Panc1 (cell line): ENCODE measurements at regions of chr4 and their contacts with region 1.

Region 1: DNA sequence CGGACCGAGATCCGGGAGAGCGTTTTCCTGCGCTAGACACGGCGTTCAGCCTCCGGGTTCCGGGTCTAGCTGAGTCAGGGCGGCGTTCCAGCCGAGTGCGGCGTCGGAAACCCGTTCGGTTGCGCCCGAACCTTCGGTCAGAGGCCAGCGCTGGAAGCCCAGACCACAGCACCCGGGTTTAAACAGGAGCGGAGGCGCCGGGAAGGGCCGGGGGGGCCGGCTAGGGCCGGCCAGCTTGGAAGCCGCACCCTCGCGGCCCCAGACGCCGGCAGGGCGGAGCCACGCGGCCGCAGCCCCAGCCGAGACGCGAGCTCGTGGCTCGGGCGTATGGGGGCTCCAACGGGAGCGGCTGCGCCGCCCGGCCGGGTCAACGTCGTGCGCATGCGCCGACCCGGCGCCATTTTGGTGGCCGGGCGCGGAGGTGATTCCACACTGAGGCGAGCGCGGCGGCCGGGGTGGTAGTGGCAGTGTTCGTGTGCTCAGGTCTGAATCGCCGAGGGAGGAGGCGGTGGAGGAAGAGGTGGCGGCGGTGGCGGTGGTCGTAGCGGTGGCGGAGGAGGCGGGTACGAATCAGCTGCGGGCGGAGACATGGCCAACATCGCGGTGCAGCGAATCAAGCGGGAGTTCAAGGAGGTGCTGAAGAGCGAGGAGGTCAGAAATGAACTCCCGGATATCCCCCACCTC is at the start of gene UBE2K:
- DNase-seq: no peak
- ATAC-seq: peak; percentile 98
- H3K4me3 ChIP-seq: peak within 1 kb of the TSS; percentile 85 to 86
- H3K27ac ChIP-seq: peak within 1 kb of the TSS; percentile 93
- H3K4me1 ChIP-seq: peaks cover 7% of the 10 kb centered on the region; the same call in 1 of the 2 replicates
- H3K27me3 ChIP-seq: no peaks in the 10 kb centered on the region
- CTCF ChIP-seq: no peak
- total RNA-seq, gene UBE2K: 84.1 TPM

Region 2: GRCh38 chr4:39486221-39486804 is 211.6 kb before region 1 on chr4:
- CTCF ChIA-PET with region 1: interaction called, 10 read pairs
- POLR2A ChIA-PET with region 1: no interaction called
- in situ Hi-C with region 1: no loop called
- intact Hi-C with region 1: no loop called
- DNase-seq: no peak
- ATAC-seq: no peak
- H3K4me3 ChIP-seq: no peak overlapping the region
- H3K27ac ChIP-seq: no peak overlapping the region
- H3K4me1 ChIP-seq: no peaks in the 10 kb centered on the region
- H3K27me3 ChIP-seq: no peaks in the 10 kb centered on the region
- CTCF ChIP-seq: no peak

Region 3: GRCh38 chr4:39713691-39714090 is 15.8 kb after region 1 on chr4:
- CTCF ChIA-PET with region 1: no interaction called
- POLR2A ChIA-PET with region 1: no interaction called
- in situ Hi-C with region 1: no loop called
- intact Hi-C with region 1: no loop called
- DNase-seq: no peak
- ATAC-seq: no peak
- H3K4me3 ChIP-seq: no peak overlapping the region
- H3K27ac ChIP-seq: no peak overlapping the region
- H3K4me1 ChIP-seq: peaks cover 14% of the 10 kb centered on the region
- H3K27me3 ChIP-seq: no peaks in the 10 kb centered on the region
- CTCF ChIP-seq: no peak

Region 4: GRCh38 chr4:39814403-39815185 is 116.7 kb after region 1 on chr4:
- CTCF ChIA-PET with region 1: no interaction called
- POLR2A ChIA-PET with region 1: no interaction called
- in situ Hi-C with region 1: no loop called
- intact Hi-C with region 1: loop called (anchors 5 kb)
- DNase-seq: no peak
- ATAC-seq: peak; percentile 7; the same call in 1 of the 2 replicates
- H3K4me3 ChIP-seq: peak overlapping the region in 1 of 2 experiments; percentile 25; a peak in 2 of 4 replicates
- H3K27ac ChIP-seq: peak overlapping the region; percentile 79
- H3K4me1 ChIP-seq: peaks cover 23% of the 10 kb centered on the region
- H3K27me3 ChIP-seq: no peaks in the 10 kb centered on the region
- CTCF ChIP-seq: no peak